ENCODE measurements at regions of chr14 and their contacts with region 1.

Region 1: GRCh38 chr14:89015016-89015415 is 190.6 kb downstream of the TTC8 start:
- DNase-seq: peak; percentile 47
- ATAC-seq: peak; percentile 54
- H3K4me3 ChIP-seq: no peak overlapping the region
- H3K27ac ChIP-seq: no peak overlapping the region
- H3K4me1 ChIP-seq: peaks cover 3% of the 10 kb centered on the region; the same call in 1 of the 2 replicates
- H3K27me3 ChIP-seq: no peaks in the 10 kb centered on the region
- CTCF ChIP-seq: peak; percentile 60

Region 2: DNA sequence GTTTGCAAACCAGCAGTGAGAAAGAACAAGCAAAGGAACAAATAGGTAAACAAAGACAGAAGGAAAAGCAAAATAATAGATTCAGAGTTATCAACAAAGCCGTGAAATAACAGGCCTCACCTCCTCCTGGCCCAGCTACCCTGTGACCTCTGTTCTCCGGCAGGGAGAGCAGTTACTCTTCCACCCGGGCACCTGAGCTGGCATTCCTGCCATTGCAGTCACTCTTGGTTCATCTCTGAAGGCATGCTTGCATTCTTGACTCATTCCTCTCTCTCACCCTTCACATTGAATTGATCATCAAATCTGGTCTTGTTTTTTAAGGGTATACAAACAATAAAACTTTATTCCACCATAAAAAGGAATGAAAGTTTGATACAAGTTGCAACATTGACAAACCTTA is 95.5 kb before region 1 on chr14:
- CTCF ChIA-PET with region 1: no interaction called
- POLR2A ChIA-PET with region 1: no interaction called
- intact Hi-C with region 1: loop called (anchors 1 kb)
- DNase-seq: peak; percentile 91
- ATAC-seq: peak; percentile 96
- H3K4me3 ChIP-seq: no peak overlapping the region
- H3K27ac ChIP-seq: peak overlapping the region; percentile 6; the same call in 1 of the 2 replicates
- H3K4me1 ChIP-seq: peaks cover 14% of the 10 kb centered on the region
- H3K27me3 ChIP-seq: no peaks in the 10 kb centered on the region
- CTCF ChIP-seq: peak; percentile 79

Region 3: GRCh38 chr14:89093083-89093730 is 78.2 kb after region 1 on chr14:
- CTCF ChIA-PET with region 1: no interaction called
- POLR2A ChIA-PET with region 1: no interaction called
- intact Hi-C with region 1: no loop called
- DNase-seq: peak; percentile 19
- ATAC-seq: peak; percentile 54
- H3K4me3 ChIP-seq: no peak overlapping the region
- H3K27ac ChIP-seq: no peak overlapping the region
- H3K4me1 ChIP-seq: no peaks in the 10 kb centered on the region
- H3K27me3 ChIP-seq: no peaks in the 10 kb centered on the region
- CTCF ChIP-seq: no peak

Region 4: DNA sequence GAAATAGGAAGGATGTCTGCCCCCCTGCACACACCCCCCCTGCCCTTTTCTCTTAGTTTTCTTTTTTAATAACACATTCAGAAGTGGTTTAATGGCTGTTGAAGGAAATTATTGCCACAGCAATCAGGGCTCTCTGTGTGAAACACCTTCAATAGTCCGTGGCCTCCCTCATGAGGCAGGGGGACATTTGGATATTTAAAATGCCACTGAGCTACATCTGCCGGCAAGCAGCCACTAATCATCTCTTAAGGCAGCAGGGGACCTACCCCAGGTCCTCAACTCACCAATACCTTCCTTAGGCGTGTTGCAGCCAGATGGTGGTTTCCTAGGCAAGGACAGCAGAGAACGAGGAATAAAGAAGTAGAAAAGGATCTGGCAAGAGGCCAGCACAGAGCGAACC is 92.6 kb after region 1 on chr14:
- CTCF ChIA-PET with region 1: no interaction called
- POLR2A ChIA-PET with region 1: no interaction called
- intact Hi-C with region 1: no loop called
- DNase-seq: no peak
- ATAC-seq: no peak
- H3K4me3 ChIP-seq: no peak overlapping the region
- H3K27ac ChIP-seq: no peak overlapping the region
- H3K4me1 ChIP-seq: no peaks in the 10 kb centered on the region
- H3K27me3 ChIP-seq: no peaks in the 10 kb centered on the region; the same call in 1 of the 2 replicates
- CTCF ChIP-seq: no peak

Region 5: GRCh38 chr14:89340200-89341181 is 325.5 kb after region 1 on chr14:
- CTCF ChIA-PET with region 1: no interaction called
- POLR2A ChIA-PET with region 1: no interaction called
- intact Hi-C with region 1: no loop called
- DNase-seq: no peak
- ATAC-seq: no peak
- H3K4me3 ChIP-seq: no peak overlapping the region
- H3K27ac ChIP-seq: no peak overlapping the region
- H3K4me1 ChIP-seq: no peaks in the 10 kb centered on the region
- H3K27me3 ChIP-seq: no peaks in the 10 kb centered on the region
- CTCF ChIP-seq: no peak